ENCODE measurements at regions of chr15 and their contacts with region 1.

Region 1: DNA sequence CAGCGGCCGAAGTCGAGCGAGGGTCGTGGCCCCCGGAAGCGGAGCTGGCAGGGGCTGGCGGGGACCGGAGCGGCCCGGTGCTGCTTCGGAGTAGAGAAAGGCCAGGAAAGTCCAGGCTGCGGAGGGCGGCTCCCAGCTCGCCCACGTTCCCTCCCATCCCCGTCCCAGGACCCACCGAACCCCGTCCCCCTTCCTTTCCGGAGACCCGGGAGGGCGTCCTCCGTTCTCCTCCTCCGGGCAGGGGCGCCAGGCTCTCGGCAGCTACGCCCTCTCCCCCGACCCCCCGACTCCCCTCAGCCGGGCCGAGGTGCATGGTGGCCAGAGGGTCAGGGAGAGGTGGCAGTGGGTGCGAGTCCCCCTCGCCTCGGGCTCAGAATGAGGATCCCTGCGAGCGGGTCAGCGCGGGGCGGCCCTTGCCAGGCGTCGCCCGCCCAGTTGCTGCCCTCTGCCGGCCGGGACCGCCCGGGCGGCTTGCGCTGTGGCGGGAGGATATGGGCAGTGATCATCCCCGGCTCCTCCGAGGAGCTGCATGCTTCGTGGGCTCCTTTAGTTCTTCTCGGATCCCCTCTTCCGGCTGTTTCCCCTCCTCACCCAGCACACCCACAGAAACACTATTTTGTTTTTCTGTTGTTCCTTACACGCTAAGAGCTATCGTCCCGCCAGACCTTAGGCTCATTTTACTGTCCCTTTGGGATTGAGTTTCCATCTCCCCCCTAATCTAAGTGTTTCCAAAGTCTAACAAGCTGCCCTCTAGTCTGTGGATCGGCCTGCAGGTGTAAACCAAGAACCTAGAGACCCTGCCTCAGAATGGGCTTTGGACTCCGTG is 744 bp upstream of the ALDH1A2 start:
- DNase-seq: no peak
- H3K4me3 ChIP-seq: peak overlapping the region; percentile 18 to 33 (median 20)
- H3K27ac ChIP-seq: no peak overlapping the region
- H3K4me1 ChIP-seq: no peaks in the 10 kb centered on the region
- H3K27me3 ChIP-seq: peaks cover 38% of the 10 kb centered on the region
- CTCF ChIP-seq: peak; percentile 55 to 89 (median 84)

Region 2: DNA sequence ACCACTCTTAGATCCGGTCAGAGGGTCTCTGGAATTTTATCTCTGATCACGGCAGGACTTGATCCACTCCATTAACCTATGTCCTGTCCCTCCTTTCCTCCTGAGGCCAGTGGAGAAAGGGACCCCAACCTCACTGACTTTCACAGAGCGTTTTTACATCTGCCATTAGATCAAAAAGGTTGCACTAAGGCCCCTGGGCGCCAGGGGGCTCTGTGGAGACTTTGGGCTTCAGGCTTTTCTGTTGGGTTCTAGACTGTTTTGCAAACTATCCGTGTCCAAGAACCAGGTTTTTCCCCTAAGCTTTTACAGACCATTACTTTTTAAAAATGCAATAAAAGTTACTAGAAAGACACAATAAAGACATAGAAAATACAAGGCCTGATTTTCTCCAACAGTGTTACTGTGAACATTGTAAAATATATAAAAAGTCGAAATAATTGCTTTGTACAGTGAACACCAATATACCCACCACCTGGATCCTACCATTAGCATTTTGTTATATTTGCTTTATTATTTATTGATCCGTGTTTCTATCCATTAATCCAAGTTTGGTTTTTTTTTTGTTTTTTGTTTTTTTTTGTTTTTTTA is 200.0 kb before region 1 on chr15:
- dilution Hi-C with region 1: loop called (anchors 5 kb)
- DNase-seq: no peak
- H3K4me3 ChIP-seq: no peak overlapping the region
- H3K27ac ChIP-seq: no peak overlapping the region
- H3K4me1 ChIP-seq: no peaks in the 10 kb centered on the region
- H3K27me3 ChIP-seq: no peaks in the 10 kb centered on the region
- CTCF ChIP-seq: peak; percentile 62 to 87 (median 85)

Region 3: DNA sequence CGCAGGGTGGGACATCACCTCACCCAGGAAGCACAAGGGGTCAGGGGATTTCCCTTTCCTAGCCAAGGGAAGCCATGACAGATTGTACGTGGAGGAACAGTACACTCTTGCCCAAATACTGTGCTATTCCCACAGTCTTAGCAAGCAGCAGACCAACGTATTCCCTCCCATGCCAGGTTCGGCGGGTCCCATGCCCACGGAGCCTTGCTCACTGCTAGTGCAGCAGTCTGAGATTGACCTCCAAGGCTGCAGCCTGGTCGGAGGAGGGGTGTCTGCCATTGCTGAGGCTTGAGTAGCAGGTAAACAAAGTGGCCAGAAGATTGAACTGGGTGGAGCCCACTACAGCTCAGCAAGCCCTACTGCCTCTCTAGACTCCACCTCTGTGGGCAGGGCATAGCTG is 39.7 kb before region 1 on chr15:
- dilution Hi-C with region 1: no loop called
- DNase-seq: no peak
- H3K4me3 ChIP-seq: no peak overlapping the region
- H3K27ac ChIP-seq: no peak overlapping the region
- H3K4me1 ChIP-seq: no peaks in the 10 kb centered on the region
- H3K27me3 ChIP-seq: no peaks in the 10 kb centered on the region
- CTCF ChIP-seq: no peak

Measured in keratinocyte (primary cell).